CD4-positive, alpha-beta T cell (primary cell): ENCODE measurements at regions of chr6 and their contacts with region 1.

Region 1: DNA sequence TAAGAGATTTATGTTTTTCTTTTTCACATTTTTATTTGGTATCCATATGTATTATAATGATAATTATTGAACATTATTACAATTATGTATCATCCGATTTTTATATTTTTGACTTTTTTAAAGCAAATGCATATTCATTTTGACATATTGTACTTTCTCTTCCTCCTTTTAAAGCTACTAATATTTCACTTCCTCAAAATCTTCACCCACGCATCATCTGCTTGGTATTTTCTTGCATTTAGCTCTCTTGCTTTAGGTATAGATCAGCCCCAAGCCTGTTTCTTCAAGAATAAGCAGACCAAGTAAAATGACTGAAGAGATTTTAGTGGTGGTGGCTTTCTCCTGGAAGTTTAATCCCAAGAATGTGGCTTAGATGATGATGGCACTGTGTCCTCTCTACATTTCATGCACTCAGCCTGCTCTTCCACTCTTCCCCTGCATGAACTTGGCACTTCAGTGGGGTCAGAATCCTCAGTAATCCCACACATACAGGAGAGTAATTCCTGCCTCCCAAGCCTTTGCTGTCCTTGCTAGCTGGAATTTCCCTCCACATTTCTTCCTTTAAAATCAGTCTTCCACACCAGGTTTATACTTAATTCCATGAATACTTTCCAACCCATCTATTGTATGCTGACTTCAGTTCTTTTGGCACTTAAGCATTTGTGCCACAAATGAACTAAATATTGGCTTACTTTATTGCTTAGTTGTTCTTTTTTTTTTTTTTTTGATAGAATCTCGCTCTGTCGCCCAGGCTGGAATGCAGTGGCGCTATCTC is 8.2 kb downstream of the NCOA7 start:
- DNase-seq: no peak
- ATAC-seq: no peak
- H3K4me3 ChIP-seq: no peak overlapping the region
- H3K4me3 Mint-ChIP-seq: no peak overlapping the region
- H3K27ac ChIP-seq: no peak overlapping the region
- H3K27ac Mint-ChIP-seq: no peak overlapping the region
- H3K4me1 ChIP-seq: peaks cover 9% of the 10 kb centered on the region
- H3K4me1 Mint-ChIP-seq: peaks cover 62% of the 10 kb centered on the region
- H3K27me3 ChIP-seq: no peaks in the 10 kb centered on the region
- H3K27me3 Mint-ChIP-seq: no peaks in the 10 kb centered on the region
- CTCF ChIP-seq: no peak

Region 2: GRCh38 chr6:125574604-125575003 is 224.3 kb before region 1 on chr6:
- CTCF ChIA-PET with region 1: no interaction called
- POLR2A ChIA-PET with region 1: no interaction called
- intact Hi-C with region 1: no loop called
- DNase-seq: no peak
- ATAC-seq: no peak
- H3K4me3 ChIP-seq: no peak overlapping the region
- H3K4me3 Mint-ChIP-seq: no peak overlapping the region
- H3K27ac ChIP-seq: no peak overlapping the region
- H3K27ac Mint-ChIP-seq: no peak overlapping the region
- H3K4me1 ChIP-seq: no peaks in the 10 kb centered on the region
- H3K4me1 Mint-ChIP-seq: no peaks in the 10 kb centered on the region
- H3K27me3 ChIP-seq: peaks cover 0 to 7% of the 10 kb centered on the region in 2 experiments
- H3K27me3 Mint-ChIP-seq: peaks cover 24% of the 10 kb centered on the region
- CTCF ChIP-seq: no peak

Region 3: GRCh38 chr6:125823180-125823579 is 24.3 kb after region 1 on chr6:
- CTCF ChIA-PET with region 1: no interaction called
- POLR2A ChIA-PET with region 1: no interaction called
- intact Hi-C with region 1: no loop called
- DNase-seq: no peak
- ATAC-seq: no peak
- H3K4me3 ChIP-seq: no peak overlapping the region
- H3K4me3 Mint-ChIP-seq: no peak overlapping the region
- H3K27ac ChIP-seq: no peak overlapping the region
- H3K27ac Mint-ChIP-seq: no peak overlapping the region
- H3K4me1 ChIP-seq: peaks cover 17% of the 10 kb centered on the region
- H3K4me1 Mint-ChIP-seq: peaks cover 49% of the 10 kb centered on the region
- H3K27me3 ChIP-seq: no peaks in the 10 kb centered on the region
- H3K27me3 Mint-ChIP-seq: no peaks in the 10 kb centered on the region
- CTCF ChIP-seq: no peak

Region 4: DNA sequence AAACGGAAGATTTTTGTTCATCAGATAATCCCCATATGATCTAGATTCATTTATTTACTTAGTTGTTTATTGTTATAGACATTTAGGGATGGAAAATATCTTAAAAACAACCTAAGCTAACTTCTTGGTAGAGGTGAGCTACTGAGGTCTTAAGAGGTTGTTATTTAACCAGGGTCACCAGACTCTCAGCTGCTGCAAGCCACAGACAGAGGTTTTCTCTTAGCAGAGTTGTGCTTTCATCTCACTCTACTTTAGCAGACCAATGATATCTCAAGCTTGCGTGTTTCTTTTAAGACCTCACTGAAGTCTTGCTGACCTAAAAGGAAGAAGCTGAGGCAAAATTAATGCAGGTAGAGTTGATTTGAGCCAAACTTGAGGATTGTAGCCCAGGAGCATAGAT is 35.4 kb after region 1 on chr6:
- CTCF ChIA-PET with region 1: no interaction called
- POLR2A ChIA-PET with region 1: interaction called, 3 read pairs
- intact Hi-C with region 1: loop called in 1 of 2 experiments (anchors 5 kb)
- DNase-seq: peak in 6 of 14 experiments; percentile 10 to 61 (median 32)
- ATAC-seq: peak; percentile 62
- H3K4me3 ChIP-seq: no peak overlapping the region
- H3K4me3 Mint-ChIP-seq: peak overlapping the region; percentile 8
- H3K27ac ChIP-seq: peak overlapping the region in 1 of 2 donors; percentile 18
- H3K27ac Mint-ChIP-seq: peak overlapping the region; percentile 83
- H3K4me1 ChIP-seq: peaks cover 31% of the 10 kb centered on the region
- H3K4me1 Mint-ChIP-seq: peaks cover 63% of the 10 kb centered on the region
- H3K27me3 ChIP-seq: no peaks in the 10 kb centered on the region
- H3K27me3 Mint-ChIP-seq: no peaks in the 10 kb centered on the region
- CTCF ChIP-seq: no peak

Region 5: DNA sequence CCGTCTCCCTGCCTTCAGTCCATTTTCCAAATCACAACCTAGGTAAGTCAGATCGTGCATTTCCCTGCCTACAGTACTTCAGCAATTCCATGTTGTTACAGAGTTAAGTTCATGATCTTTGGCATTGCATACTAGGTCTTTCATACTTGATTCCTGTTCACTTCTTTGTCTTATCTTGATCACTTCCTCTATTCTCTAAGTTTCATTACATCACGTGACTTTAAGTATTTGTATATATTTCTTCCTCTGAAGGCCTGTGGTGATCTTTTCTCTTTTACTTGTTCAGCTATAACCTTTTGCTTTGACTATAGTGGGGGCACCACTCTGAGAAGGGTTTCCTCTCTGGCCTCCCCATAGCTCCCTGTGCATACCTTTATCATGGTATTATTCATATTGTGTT is 287.6 kb after region 1 on chr6:
- CTCF ChIA-PET with region 1: no interaction called
- POLR2A ChIA-PET with region 1: no interaction called
- intact Hi-C with region 1: no loop called
- DNase-seq: no peak
- ATAC-seq: no peak
- H3K4me3 ChIP-seq: no peak overlapping the region
- H3K4me3 Mint-ChIP-seq: no peak overlapping the region
- H3K27ac ChIP-seq: no peak overlapping the region
- H3K27ac Mint-ChIP-seq: no peak overlapping the region
- H3K4me1 ChIP-seq: no peaks in the 10 kb centered on the region
- H3K4me1 Mint-ChIP-seq: no peaks in the 10 kb centered on the region
- H3K27me3 ChIP-seq: no peaks in the 10 kb centered on the region
- H3K27me3 Mint-ChIP-seq: no peaks in the 10 kb centered on the region
- CTCF ChIP-seq: no peak